RWPE1 (cell line): ENCODE measurements at regions of chr3 and their contacts with region 1.

Region 1: GRCh38 chr3:134364061-134364935 is 9.9 kb downstream of the AMOTL2 start:
- DNase-seq: peak; percentile 97
- H3K27ac ChIP-seq: peak overlapping the region; percentile 97
- CTCF ChIP-seq: no peak

Region 2: DNA sequence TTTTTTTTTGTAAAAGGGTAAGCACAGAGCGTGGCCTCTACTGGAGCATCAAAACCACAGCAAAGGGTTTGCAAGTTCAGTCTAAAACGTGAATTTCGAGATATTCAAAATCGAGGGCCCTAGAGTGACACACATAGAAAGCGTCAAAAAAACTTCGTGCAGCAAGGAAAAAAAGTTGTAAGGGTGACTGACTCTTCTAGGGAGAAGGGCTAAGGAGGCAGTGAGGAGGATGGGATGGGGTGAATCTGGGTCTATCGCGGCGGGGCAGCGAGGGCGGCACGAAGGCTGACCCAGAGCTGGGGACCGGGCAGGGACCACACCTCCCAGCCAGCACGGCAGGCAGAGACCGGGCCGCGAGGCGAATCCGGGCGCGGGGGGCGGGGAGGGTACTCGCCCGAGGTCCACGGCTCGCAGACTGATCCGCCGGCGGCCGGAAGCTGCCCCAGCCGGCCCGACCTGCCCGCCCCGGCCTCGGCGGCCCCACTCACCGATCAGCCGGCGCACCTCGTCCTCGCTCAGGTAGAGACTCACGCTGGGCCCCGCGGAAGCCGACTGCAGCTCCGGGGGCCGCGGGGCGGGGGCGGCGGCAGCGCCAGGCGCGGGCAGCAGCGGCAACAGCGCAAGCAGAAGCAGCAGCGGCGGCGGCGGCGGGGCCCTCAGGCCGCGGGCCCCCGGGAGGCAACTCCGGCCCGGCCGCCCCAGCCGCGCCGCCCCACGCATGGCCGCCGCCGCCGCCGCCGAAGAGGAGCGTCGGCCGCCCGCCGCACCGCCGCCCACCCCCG is 114.2 kb before region 1 on chr3:
- CTCF ChIA-PET with region 1: no interaction called
- POLR2A ChIA-PET with region 1: interaction called, 15 read pairs
- DNase-seq: peak; percentile 58
- H3K27ac ChIP-seq: peak overlapping the region; percentile 92
- CTCF ChIP-seq: no peak

Region 3: GRCh38 chr3:134353831-134354611 is 10.3 kb before region 1 on chr3:
- CTCF ChIA-PET with region 1: interaction called, 3 read pairs
- POLR2A ChIA-PET with region 1: interaction called, 11 read pairs
- DNase-seq: no peak
- H3K27ac ChIP-seq: peak overlapping the region; percentile 79
- CTCF ChIP-seq: no peak